ENCODE measurements at regions of chr9 and their contacts with region 1.

Region 1: GRCh38 chr9:7570107-7570720 is 229.4 kb downstream of the DMAC1 start:
- DNase-seq: peak; percentile 68
- ATAC-seq: no peak
- H3K4me3 ChIP-seq: no peak overlapping the region
- H3K4me3 Mint-ChIP-seq: no peak overlapping the region
- H3K27ac ChIP-seq: no peak overlapping the region
- H3K27ac Mint-ChIP-seq: no peak overlapping the region
- H3K4me1 ChIP-seq: no peaks in the 10 kb centered on the region
- H3K4me1 Mint-ChIP-seq: no peaks in the 10 kb centered on the region
- H3K27me3 ChIP-seq: peaks cover 0 to 4% (median 0%) of the 10 kb centered on the region in 4 experiments
- H3K27me3 Mint-ChIP-seq: peaks cover 26% of the 10 kb centered on the region
- CTCF ChIP-seq: peak; percentile 94

Region 2: GRCh38 chr9:8895861-8896224 is 1325.6 kb after region 1 on chr9:
- CTCF ChIA-PET with region 1: interaction called, 13 read pairs
- POLR2A ChIA-PET with region 1: no interaction called
- intact Hi-C with region 1: no loop called
- DNase-seq: peak; percentile 16
- ATAC-seq: no peak
- H3K4me3 ChIP-seq: no peak overlapping the region
- H3K4me3 Mint-ChIP-seq: no peak overlapping the region
- H3K27ac ChIP-seq: no peak overlapping the region
- H3K27ac Mint-ChIP-seq: no peak overlapping the region
- H3K4me1 ChIP-seq: no peaks in the 10 kb centered on the region
- H3K4me1 Mint-ChIP-seq: no peaks in the 10 kb centered on the region
- H3K27me3 ChIP-seq: no peaks in the 10 kb centered on the region
- H3K27me3 Mint-ChIP-seq: no peaks in the 10 kb centered on the region
- CTCF ChIP-seq: peak; percentile 40